Tibial artery (tissue), 4 donors: ENCODE measurements at regions of chr2 and their contacts with region 1.

Region 1: DNA sequence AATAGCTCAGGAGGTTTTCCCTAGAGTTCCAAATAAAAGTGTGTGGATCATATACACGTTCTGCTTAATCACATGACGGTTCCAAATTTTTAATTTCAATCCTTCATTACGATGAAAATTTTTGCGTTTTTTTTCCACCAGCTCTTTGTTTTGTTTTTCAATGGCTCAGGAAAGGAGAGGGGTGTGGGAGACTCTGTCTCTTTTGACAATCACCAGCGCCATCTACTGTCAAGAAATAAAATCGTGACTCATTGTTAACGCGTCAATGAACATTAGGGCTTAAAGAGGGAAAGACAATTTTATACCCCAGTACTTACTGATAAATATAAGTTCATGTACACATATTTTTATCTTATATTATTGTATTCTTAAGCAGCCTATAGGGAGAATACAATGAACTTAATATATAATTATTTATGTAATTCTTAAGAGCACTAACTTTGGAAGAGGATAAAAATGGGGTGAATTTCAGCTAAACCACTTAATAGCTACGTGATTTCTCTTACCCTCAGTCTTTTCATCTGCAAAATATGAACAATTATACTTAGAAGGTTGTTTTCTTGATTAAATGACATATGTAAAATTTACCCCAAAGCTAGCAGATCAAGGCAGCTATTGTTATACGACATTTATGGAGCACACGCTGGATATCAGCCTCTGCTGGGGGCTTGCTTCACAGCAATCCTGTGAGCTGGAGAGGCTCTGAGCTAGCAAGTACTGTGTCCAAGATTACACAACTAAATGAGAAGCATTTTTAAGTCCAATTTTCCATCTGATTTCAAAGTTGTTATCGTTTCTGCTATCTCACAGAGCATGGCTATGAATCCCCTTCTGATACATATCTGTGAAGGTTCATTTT is 47.4 kb upstream of the RMDN2 start:
- DNase-seq: no peak
- H3K4me3 ChIP-seq: no peak overlapping the region
- H3K27ac ChIP-seq: no peak overlapping the region
- H3K4me1 ChIP-seq: peaks cover 0 to 21% (median 1%) of the 10 kb centered on the region in 4 donors
- H3K27me3 ChIP-seq: no peaks in the 10 kb centered on the region
- CTCF ChIP-seq: peak; percentile 66 to 84

Region 2: GRCh38 chr2:37389989-37390765 is 487.5 kb before region 1 on chr2:
- intact Hi-C with region 1: loop called (anchors 1 kb)
- DNase-seq: no peak
- H3K4me3 ChIP-seq: no peak overlapping the region
- H3K27ac ChIP-seq: no peak overlapping the region
- H3K4me1 ChIP-seq: peaks cover 0 to 3% (median 0%) of the 10 kb centered on the region in 4 donors
- H3K27me3 ChIP-seq: no peaks in the 10 kb centered on the region
- CTCF ChIP-seq: no peak

Region 3: GRCh38 chr2:37819186-37819585 is 58.5 kb before region 1 on chr2:
- intact Hi-C with region 1: loop called (anchors 10 kb)
- DNase-seq: no peak
- H3K4me3 ChIP-seq: no peak overlapping the region
- H3K27ac ChIP-seq: no peak overlapping the region
- H3K4me1 ChIP-seq: no peaks in the 10 kb centered on the region
- H3K27me3 ChIP-seq: no peaks in the 10 kb centered on the region
- CTCF ChIP-seq: no peak